Ovary (tissue), 10 donors: ENCODE measurements at regions of chr4 and their contacts with region 1.

Region 1: GRCh38 chr4:89868999-89869589 is 25.6 kb upstream of the MMRN1 start:
- DNase-seq: no peak
- H3K4me3 ChIP-seq: no peak overlapping the region
- H3K27ac ChIP-seq: no peak overlapping the region
- H3K4me1 ChIP-seq: no peaks in the 10 kb centered on the region
- H3K27me3 ChIP-seq: no peaks in the 10 kb centered on the region
- CTCF ChIP-seq: no peak
- EP300 ChIP-seq: no peak
- POLR2A ChIP-seq: no peak

Region 2: GRCh38 chr4:89563431-89563830 is 305.7 kb before region 1 on chr4:
- intact Hi-C with region 1: no loop called
- DNase-seq: no peak
- H3K4me3 ChIP-seq: no peak overlapping the region
- H3K27ac ChIP-seq: no peak overlapping the region
- H3K4me1 ChIP-seq: no peaks in the 10 kb centered on the region
- H3K27me3 ChIP-seq: no peaks in the 10 kb centered on the region
- CTCF ChIP-seq: no peak
- EP300 ChIP-seq: no peak
- POLR2A ChIP-seq: no peak

Region 3: GRCh38 chr4:89657931-89658700 is 211.0 kb before region 1 on chr4:
- intact Hi-C with region 1: loop called in 2 of 4 experiments (anchors 5 to 10 kb)
- DNase-seq: no peak
- H3K4me3 ChIP-seq: no peak overlapping the region
- H3K27ac ChIP-seq: no peak overlapping the region
- H3K4me1 ChIP-seq: no peaks in the 10 kb centered on the region
- H3K27me3 ChIP-seq: no peaks in the 10 kb centered on the region
- CTCF ChIP-seq: peak in 2 of 3 donors; percentile 16 to 33
- EP300 ChIP-seq: no peak
- POLR2A ChIP-seq: no peak

Region 4: DNA sequence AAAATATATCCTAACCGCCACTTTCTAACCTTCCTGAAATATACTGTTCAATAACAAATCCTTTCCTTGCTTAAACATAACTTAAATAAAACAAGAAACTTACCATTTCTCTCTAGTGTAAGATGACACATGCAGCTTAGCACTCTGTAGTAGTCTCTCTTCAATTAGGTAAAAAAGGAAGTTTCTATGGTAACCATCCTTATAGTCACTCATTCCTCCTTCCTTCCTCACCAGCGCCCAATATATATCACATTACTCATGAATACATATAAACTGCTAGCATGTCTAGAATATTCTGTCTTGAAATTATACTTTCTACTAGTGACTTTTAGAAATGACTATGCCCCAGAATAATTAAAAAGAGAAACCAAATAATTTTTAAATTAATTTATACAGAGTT is 144.4 kb before region 1 on chr4:
- intact Hi-C with region 1: no loop called
- DNase-seq: no peak
- H3K4me3 ChIP-seq: no peak overlapping the region
- H3K27ac ChIP-seq: no peak overlapping the region
- H3K4me1 ChIP-seq: no peaks in the 10 kb centered on the region
- H3K27me3 ChIP-seq: no peaks in the 10 kb centered on the region
- CTCF ChIP-seq: no peak
- EP300 ChIP-seq: no peak
- POLR2A ChIP-seq: no peak

Region 5: DNA sequence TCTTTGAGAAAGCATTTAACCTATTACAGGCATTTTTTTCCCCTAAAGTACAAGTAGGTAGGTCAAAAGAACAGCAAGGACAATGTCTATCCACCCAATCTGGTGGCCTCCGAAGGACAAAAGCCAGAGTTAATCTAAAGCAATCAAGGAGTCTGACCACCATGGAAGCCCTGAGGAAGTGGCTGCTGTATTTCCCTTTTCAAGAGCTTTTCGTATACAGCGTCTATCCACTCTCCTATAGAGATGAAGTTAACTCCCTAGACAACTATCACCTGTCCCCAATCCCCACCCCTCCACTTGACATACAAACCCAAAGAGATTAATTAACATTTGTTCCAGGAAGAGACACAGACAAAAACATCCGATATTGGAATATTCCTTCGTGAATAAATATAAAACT is 117.7 kb before region 1 on chr4:
- intact Hi-C with region 1: no loop called
- DNase-seq: no peak
- H3K4me3 ChIP-seq: no peak overlapping the region
- H3K27ac ChIP-seq: no peak overlapping the region
- H3K4me1 ChIP-seq: peaks cover 9% of the 10 kb centered on the region
- H3K27me3 ChIP-seq: no peaks in the 10 kb centered on the region
- CTCF ChIP-seq: no peak
- EP300 ChIP-seq: no peak
- POLR2A ChIP-seq: no peak

Region 6: DNA sequence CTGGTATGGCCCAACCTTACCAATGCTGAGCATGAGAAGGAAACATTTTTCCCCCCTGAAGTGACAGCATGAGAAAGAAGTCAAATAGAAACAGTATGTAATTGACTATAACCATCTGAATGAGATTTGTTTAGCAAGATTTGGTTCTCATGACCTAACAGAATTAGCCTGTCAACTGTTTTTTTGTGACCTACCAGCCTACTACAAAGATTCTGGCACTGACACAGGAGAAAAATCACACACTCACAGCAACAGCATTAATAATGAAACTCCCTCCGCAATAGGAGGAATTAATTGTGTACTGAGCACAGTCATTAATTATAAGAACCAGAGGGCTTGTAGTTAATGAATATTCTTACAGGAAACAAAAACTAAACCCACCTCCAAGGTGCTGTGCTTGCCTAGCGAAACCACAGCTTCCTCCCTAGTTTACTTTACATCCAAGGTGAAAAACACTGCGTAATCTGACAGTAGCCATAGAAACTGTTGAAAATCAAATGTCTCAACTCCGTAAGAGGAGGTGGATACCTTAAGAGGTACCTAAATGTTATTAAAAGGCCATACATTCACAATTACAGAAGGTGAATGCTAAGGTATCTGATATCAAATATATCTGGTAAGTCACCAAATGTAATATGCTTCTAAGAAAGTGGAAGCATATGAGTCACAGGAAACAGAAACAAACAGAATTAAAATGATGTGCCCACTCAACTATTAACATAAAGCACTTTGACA is 60.5 kb after region 1 on chr4:
- intact Hi-C with region 1: no loop called
- DNase-seq: no peak
- H3K4me3 ChIP-seq: no peak overlapping the region
- H3K27ac ChIP-seq: no peak overlapping the region
- H3K4me1 ChIP-seq: no peaks in the 10 kb centered on the region
- H3K27me3 ChIP-seq: no peaks in the 10 kb centered on the region
- CTCF ChIP-seq: no peak
- EP300 ChIP-seq: no peak
- POLR2A ChIP-seq: no peak